ENCODE measurements at regions of chr12 and their contacts with region 1.

Region 1: GRCh38 chr12:74328616-74329015 is 209.0 kb upstream of the ATXN7L3B start:
- DNase-seq: no peak
- H3K4me3 Mint-ChIP-seq: no peak overlapping the region
- H3K27ac Mint-ChIP-seq: no peak overlapping the region
- H3K4me1 Mint-ChIP-seq: no peaks in the 10 kb centered on the region
- H3K27me3 Mint-ChIP-seq: no peaks in the 10 kb centered on the region
- CTCF ChIP-seq: no peak

Region 2: GRCh38 chr12:74111688-74112360 is 216.8 kb before region 1 on chr12:
- CTCF ChIA-PET with region 1: no interaction called
- POLR2A ChIA-PET with region 1: no interaction called
- intact Hi-C with region 1: no loop called
- DNase-seq: peak; percentile 63
- H3K4me3 Mint-ChIP-seq: no peak overlapping the region
- H3K27ac Mint-ChIP-seq: no peak overlapping the region
- H3K4me1 Mint-ChIP-seq: peaks cover 7% of the 10 kb centered on the region
- H3K27me3 Mint-ChIP-seq: no peaks in the 10 kb centered on the region
- CTCF ChIP-seq: peak; percentile 37

Region 3: GRCh38 chr12:74317078-74317601 is 11.5 kb before region 1 on chr12:
- CTCF ChIA-PET with region 1: interaction called, 11 read pairs
- POLR2A ChIA-PET with region 1: no interaction called
- intact Hi-C with region 1: no loop called
- DNase-seq: peak; percentile 62
- H3K4me3 Mint-ChIP-seq: no peak overlapping the region
- H3K27ac Mint-ChIP-seq: no peak overlapping the region
- H3K4me1 Mint-ChIP-seq: peaks cover 14% of the 10 kb centered on the region
- H3K27me3 Mint-ChIP-seq: no peaks in the 10 kb centered on the region
- CTCF ChIP-seq: peak; percentile 52

Region 4: DNA sequence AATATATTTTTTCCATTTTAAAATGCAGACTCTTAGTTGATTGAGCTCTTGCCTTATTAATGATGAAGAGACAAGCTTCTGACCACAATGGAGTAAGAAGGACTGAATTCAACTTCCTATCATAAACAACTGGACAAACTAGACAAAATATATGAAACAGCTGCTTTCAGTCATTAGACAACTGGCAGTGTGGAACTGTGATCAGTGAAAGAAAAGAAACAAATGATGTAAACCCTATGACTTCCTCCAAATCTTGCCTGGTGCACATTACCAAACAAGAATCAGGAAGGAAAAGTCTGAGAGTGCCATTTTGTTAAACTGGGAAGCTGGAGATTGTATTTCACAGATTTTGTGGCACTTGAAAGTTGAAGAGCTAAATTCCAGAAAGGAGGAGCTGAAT is 54.4 kb after region 1 on chr12:
- CTCF ChIA-PET with region 1: no interaction called
- POLR2A ChIA-PET with region 1: no interaction called
- intact Hi-C with region 1: no loop called
- DNase-seq: no peak
- H3K4me3 Mint-ChIP-seq: no peak overlapping the region
- H3K27ac Mint-ChIP-seq: no peak overlapping the region
- H3K4me1 Mint-ChIP-seq: no peaks in the 10 kb centered on the region
- H3K27me3 Mint-ChIP-seq: no peaks in the 10 kb centered on the region
- CTCF ChIP-seq: no peak

Region 5: DNA sequence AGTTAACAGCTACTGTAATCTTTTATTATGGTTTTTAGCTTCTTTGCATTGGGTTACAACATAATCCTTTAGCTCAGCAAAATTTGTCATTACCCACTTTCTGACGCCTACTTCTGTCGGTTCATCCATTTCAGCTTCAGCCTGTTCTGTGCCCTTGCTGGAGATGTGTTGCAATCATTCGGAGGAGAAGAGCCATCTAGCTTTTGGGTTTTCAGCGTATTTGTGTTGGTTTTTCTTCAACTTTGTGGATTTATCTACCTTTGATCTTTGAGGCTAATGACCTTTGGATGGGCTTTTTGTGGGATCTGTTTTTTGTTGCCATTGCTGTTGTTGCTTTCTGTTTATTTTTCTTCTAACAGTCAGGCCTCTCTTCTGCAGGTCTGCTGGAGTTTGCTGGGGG is 139.8 kb after region 1 on chr12:
- CTCF ChIA-PET with region 1: no interaction called
- POLR2A ChIA-PET with region 1: no interaction called
- intact Hi-C with region 1: no loop called
- DNase-seq: no peak
- H3K4me3 Mint-ChIP-seq: no peak overlapping the region
- H3K27ac Mint-ChIP-seq: no peak overlapping the region
- H3K4me1 Mint-ChIP-seq: no peaks in the 10 kb centered on the region
- H3K27me3 Mint-ChIP-seq: no peaks in the 10 kb centered on the region
- CTCF ChIP-seq: no peak

Measured in MCF 10A (cell line).